Activated naive CD4-positive, alpha-beta T cell treated with anti-CD3 and anti-CD28 coated beads, Interleukin-2, amount 10 ng/mL, durations not matched to agents 7 days and 5 days (primary cell): ENCODE measurements at regions of chr10 and their contacts with region 1.

Region 1: DNA sequence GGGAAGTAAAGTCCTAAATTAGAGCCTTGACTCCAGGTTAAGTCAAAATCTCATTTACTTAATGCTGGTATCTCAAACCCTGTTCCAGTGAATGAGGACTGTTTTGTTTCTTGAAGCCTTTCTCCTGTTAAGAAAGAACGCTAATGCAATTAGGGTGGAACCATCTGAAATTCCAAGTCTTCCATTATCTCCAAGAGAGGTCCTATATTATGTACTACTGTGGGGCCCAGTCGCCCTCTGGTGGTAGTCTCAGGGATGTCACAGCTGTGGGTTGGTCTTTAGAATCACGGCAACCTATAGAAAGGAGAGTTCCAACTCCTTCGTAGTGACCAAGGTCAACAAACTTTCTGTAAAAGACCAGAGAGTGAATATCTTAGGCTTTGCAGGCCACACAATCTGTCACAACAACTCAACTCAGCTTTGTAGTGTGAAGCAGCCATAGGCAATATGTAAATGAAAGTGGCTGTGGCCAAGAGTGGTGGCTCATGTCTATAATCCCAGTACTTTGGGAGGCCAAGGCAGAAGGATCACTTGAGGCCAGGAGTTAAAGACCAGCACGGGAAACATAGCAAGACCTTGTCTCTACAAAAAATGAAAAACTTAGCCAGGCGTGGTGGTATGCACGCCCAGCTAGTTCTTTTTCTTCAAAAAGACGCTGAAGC is 9.3 kb downstream of the RPP38 start:
- DNase-seq: peak; percentile 80
- H3K4me3 Mint-ChIP-seq: no peak overlapping the region
- H3K27ac Mint-ChIP-seq: no peak overlapping the region
- H3K4me1 Mint-ChIP-seq: peaks cover 5% of the 10 kb centered on the region
- H3K27me3 Mint-ChIP-seq: no peaks in the 10 kb centered on the region

Region 2: GRCh38 chr10:14995964-14996565 is 110.4 kb before region 1 on chr10:
- CTCF ChIA-PET with region 1: interaction called, 16 read pairs
- DNase-seq: no peak
- H3K4me3 Mint-ChIP-seq: no peak overlapping the region
- H3K27ac Mint-ChIP-seq: no peak overlapping the region
- H3K4me1 Mint-ChIP-seq: peaks cover 3% of the 10 kb centered on the region
- H3K27me3 Mint-ChIP-seq: peaks cover 24% of the 10 kb centered on the region

Region 3: GRCh38 chr10:15131330-15131729 is 24.8 kb after region 1 on chr10:
- CTCF ChIA-PET with region 1: interaction called, 12 read pairs
- DNase-seq: no peak
- H3K4me3 Mint-ChIP-seq: no peak overlapping the region
- H3K27ac Mint-ChIP-seq: no peak overlapping the region
- H3K4me1 Mint-ChIP-seq: peaks cover 3% of the 10 kb centered on the region
- H3K27me3 Mint-ChIP-seq: no peaks in the 10 kb centered on the region

Region 4: DNA sequence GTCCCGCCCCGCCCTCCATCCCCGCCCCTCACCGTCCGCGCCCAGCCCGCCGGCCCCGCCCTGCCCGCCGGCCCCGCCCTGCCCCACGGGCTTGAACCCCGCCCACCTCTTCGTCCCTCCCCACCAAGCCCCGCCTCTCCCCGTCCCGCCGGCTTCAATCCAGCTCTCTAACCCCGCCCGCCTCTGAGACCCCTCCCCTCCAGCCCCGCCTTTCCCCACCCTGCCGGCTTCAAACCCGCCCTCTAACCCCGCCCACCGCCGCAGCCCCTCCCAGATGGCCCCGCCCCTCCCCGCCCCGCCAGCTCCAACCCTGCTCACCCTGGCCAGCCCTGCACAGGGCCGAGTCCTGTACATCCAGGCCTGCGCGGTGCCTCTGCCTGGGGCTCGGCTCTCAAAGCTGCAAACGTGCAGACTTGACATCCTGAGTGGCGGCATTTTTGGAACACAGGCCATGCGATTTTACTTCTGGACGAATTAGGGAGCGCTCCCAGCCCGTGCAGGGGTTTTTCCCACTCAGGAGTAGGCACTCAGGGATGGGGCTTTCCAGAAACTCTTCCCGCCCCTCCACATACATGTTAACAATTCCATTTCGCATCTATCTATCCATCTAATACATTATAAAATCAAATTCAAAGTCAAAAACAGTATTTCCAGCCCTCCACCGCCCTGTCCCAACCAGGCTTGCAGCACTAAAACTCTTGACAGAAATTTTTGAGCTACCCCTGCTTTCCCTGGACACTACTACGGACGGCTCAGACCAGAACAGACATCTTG is 62.5 kb after region 1 on chr10:
- CTCF ChIA-PET with region 1: interaction called, 11 read pairs
- DNase-seq: peak; percentile 98
- H3K4me3 Mint-ChIP-seq: peak overlapping the region; percentile 80
- H3K27ac Mint-ChIP-seq: peak overlapping the region; percentile 98
- H3K4me1 Mint-ChIP-seq: peaks cover 63% of the 10 kb centered on the region
- H3K27me3 Mint-ChIP-seq: peaks cover 4% of the 10 kb centered on the region